Endothelial cell of umbilical vein (primary cell): ENCODE measurements at regions of chr13 and their contacts with region 1.

Region 1: DNA sequence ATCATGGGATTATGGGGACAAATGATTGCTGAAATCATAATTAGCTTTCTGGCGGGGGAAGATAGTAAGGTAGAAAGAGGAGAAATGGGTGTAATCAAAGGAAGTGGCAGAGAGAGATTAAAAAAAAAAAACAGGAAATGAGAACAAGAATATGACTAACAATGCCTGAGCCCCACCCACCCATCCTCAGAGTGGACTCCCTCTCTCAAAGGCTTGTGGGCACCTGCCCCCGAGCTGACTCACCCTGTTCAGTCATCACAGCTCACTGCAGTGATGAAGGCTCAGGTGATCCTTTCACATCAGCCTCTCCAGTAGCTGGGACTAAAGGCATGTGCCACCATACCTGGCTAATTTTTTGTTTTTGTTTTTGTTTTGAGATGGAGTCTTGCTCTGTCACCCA is 26.4 kb upstream of the TPT1 start:
- DNase-seq: peak; percentile 79
- H3K4me3 ChIP-seq: no peak overlapping the region
- H3K27ac ChIP-seq: peak overlapping the region; percentile 34
- H3K4me1 ChIP-seq: peaks cover 13% of the 10 kb centered on the region
- H3K27me3 ChIP-seq: no peaks in the 10 kb centered on the region
- CTCF ChIP-seq: no peak
- POLR2A ChIP-seq: no peak

Region 2: GRCh38 chr13:45340926-45341750 is 26.2 kb before region 1 on chr13 and contains the start of gene TPT1:
- CTCF ChIA-PET with region 1: interaction called, 14 read pairs
- POLR2A ChIA-PET with region 1: interaction called, 3 read pairs
- dilution Hi-C with region 1: no loop called
- intact Hi-C with region 1: loop called (anchors 2 kb)
- DNase-seq: peak; percentile 99
- H3K4me3 ChIP-seq: peak within 1 kb of the TSS; percentile 84 to 99 (median 95)
- H3K27ac ChIP-seq: peak within 1 kb of the TSS; percentile 91
- H3K4me1 ChIP-seq: peaks cover 42% of the 10 kb centered on the region
- H3K27me3 ChIP-seq: no peaks in the 10 kb centered on the region
- CTCF ChIP-seq: no peak
- POLR2A ChIP-seq: peak; percentile 97
- total RNA-seq, gene TPT1: 2,923 and 2,993 TPM in 2 replicates

Region 3: GRCh38 chr13:45393941-45394570 is 26.7 kb after region 1 on chr13:
- CTCF ChIA-PET with region 1: interaction called, 98 read pairs
- POLR2A ChIA-PET with region 1: no interaction called
- dilution Hi-C with region 1: no loop called
- intact Hi-C with region 1: loop called (anchors 1 kb)
- DNase-seq: peak; percentile 55
- H3K4me3 ChIP-seq: no peak overlapping the region
- H3K27ac ChIP-seq: no peak overlapping the region
- H3K4me1 ChIP-seq: peaks cover 45% of the 10 kb centered on the region
- H3K27me3 ChIP-seq: no peaks in the 10 kb centered on the region
- CTCF ChIP-seq: peak; percentile 31 to 73
- POLR2A ChIP-seq: no peak

Region 4: GRCh38 chr13:45439781-45440462 is 72.6 kb after region 1 on chr13:
- CTCF ChIA-PET with region 1: interaction called, 10 read pairs
- POLR2A ChIA-PET with region 1: no interaction called
- dilution Hi-C with region 1: no loop called
- intact Hi-C with region 1: no loop called
- DNase-seq: no peak
- H3K4me3 ChIP-seq: no peak overlapping the region
- H3K27ac ChIP-seq: no peak overlapping the region
- H3K4me1 ChIP-seq: peaks cover 12% of the 10 kb centered on the region
- H3K27me3 ChIP-seq: no peaks in the 10 kb centered on the region
- CTCF ChIP-seq: no peak
- POLR2A ChIP-seq: no peak

Region 5: GRCh38 chr13:45473627-45474026 is 106.3 kb after region 1 on chr13:
- CTCF ChIA-PET with region 1: interaction called, 13 read pairs
- POLR2A ChIA-PET with region 1: no interaction called
- dilution Hi-C with region 1: no loop called
- intact Hi-C with region 1: no loop called
- DNase-seq: no peak
- H3K4me3 ChIP-seq: no peak overlapping the region
- H3K27ac ChIP-seq: no peak overlapping the region
- H3K4me1 ChIP-seq: no peaks in the 10 kb centered on the region
- H3K27me3 ChIP-seq: no peaks in the 10 kb centered on the region
- CTCF ChIP-seq: peak in 1 of 2 donors; percentile 12
- POLR2A ChIP-seq: no peak

Region 6: GRCh38 chr13:45490068-45490467 is 122.7 kb after region 1 on chr13:
- CTCF ChIA-PET with region 1: interaction called, 11 read pairs
- POLR2A ChIA-PET with region 1: no interaction called
- dilution Hi-C with region 1: no loop called
- intact Hi-C with region 1: loop called (anchors 1 kb)
- DNase-seq: peak; percentile 14
- H3K4me3 ChIP-seq: no peak overlapping the region
- H3K27ac ChIP-seq: no peak overlapping the region
- H3K4me1 ChIP-seq: no peaks in the 10 kb centered on the region
- H3K27me3 ChIP-seq: no peaks in the 10 kb centered on the region
- CTCF ChIP-seq: no peak
- POLR2A ChIP-seq: no peak

Region 7: DNA sequence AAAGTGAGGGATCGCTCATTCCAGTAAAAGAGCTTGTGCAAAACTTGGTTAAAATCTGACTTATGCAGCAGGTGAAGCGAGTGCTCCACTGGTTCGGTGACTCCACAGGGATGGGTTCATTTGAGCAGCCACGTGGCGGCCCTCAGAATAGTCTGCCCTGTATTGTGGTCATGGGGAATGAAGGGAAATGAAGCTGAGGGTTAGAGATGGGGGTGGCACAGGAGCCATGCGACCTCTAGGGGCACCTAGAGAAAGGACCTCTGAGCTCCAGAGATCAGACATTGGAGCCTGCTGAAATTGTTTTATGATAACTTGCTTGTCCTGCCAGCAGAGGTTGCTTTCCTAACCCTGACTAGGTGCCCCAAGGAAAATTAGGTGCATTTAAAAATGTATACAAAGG is 361.4 kb after region 1 on chr13:
- CTCF ChIA-PET with region 1: no interaction called
- POLR2A ChIA-PET with region 1: no interaction called
- dilution Hi-C with region 1: no loop called
- intact Hi-C with region 1: loop called (anchors 5 kb)
- DNase-seq: no peak
- H3K4me3 ChIP-seq: no peak overlapping the region
- H3K27ac ChIP-seq: no peak overlapping the region
- H3K4me1 ChIP-seq: no peaks in the 10 kb centered on the region
- H3K27me3 ChIP-seq: peaks cover 0 to 8% of the 10 kb centered on the region in 2 experiments
- CTCF ChIP-seq: peak in 1 of 2 donors; percentile 27
- POLR2A ChIP-seq: no peak